ENCODE measurements at regions of chr10 and their contacts with region 1.

Region 1: DNA sequence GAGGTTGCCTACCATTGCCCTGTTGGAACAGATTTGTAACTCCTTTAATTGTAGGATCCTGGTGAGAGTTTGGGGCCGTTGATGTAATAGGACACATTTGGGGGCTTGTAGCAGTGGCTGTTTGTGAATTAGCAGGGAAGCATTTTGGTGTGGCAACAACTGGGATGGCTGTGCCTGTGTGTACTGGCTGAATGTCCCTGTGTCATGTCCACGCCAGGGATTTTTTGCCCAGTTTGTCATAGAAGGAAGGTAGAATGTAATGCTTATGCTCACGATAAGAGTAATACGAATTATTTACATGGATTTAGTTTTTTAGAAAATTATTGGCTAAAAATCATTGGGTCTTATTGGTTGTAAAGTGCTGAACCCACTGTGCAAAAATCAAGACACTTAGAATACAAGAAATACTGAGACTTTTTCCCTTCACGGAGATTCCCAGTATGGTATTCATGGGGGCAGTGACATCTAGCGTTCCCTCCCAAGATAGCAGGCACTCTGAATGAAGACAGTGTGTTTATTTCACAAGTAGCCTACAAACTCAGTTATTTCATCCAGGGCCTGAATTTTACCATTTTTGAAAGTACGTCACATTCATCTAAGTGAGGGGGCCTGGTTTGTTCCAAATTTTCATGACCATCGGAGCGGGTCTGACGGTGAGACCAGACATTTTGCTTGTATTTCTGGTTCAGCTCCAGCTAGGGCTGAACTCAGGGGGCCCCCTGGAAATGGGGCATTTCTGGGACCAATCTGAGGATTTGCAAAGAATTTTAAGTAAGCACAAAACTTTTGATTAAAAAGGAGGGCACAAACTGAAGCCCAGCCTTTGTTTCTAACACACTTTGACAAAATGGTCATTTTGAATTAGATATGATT is 74.7 kb downstream of the CACNB2 start:
- DNase-seq: peak in 6 of 10 donors; percentile 23 to 75 (median 50)
- H3K4me3 ChIP-seq: peak overlapping the region in 1 of 59 donors; percentile 11
- H3K27ac ChIP-seq: peak overlapping the region in 3 of 59 donors; percentile 5 to 32 (median 26)
- H3K27me3 ChIP-seq: peaks cover 0 to under 1% (median 0%) of the 10 kb centered on the region in 45 donors
- CTCF ChIP-seq: peak in 55 of 56 donors; percentile 48 to 89 (median 76)

Region 2: DNA sequence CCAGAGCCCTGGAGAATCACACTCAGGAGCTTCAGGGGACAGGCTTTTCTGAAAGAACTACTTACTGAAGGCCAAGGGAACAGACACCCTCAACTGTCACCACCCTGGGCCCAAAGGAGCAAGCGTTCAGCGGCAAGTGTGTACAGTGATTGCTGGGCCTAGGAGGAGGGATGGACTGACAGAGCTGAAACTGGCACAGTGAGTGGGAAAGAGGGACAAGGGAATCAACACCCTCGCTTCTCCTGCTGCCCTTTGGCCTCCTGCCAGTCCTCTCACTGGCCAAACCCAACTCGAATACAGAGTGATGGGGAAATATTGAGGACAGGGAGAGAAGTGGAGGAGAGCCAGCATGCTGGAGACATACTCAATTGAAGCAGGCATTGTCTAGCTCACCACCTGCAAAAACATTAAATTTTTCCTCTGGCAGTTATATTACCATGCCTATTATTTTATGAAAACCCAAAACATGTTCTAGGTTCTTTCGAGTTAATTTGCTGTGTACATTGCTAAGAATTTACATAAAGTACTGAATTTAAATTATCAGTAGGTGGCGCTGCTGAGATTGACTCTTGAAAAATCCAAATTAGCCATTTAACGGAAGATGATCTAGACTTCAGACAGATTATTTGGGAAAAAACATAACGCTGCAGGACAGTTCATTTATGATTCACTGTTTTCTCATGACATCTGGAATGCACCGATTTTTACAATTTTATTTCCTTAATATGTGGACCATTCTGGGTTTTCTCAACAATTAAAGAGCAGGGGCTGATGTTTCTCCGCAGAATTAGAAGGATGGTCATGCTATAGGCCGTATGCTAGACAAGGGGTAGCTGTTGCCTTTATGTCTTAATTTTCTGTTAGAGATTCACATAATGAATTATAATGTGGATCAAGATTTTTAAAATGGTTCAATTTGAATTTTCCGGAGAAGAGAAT is 477.6 kb before region 1 on chr10:
- intact Hi-C with region 1: loop called in 1 of 2 experiments (anchors 10 kb)
- DNase-seq: peak in 1 of 10 donors; percentile 41
- H3K4me3 ChIP-seq: peak overlapping the region in 1 of 59 donors; percentile 3
- H3K27ac ChIP-seq: peak overlapping the region in 1 of 59 donors; percentile 49
- H3K27me3 ChIP-seq: no peaks in the 10 kb centered on the region
- CTCF ChIP-seq: peak; percentile 47 to 82 (median 72)

Region 3: GRCh38 chr10:17847585-17848296 is 367.2 kb before region 1 on chr10:
- intact Hi-C with region 1: loop called (anchors 10 kb)
- DNase-seq: no peak
- H3K4me3 ChIP-seq: peak overlapping the region in 2 of 59 donors; percentile 4 to 21
- H3K27ac ChIP-seq: no peak overlapping the region
- H3K27me3 ChIP-seq: no peaks in the 10 kb centered on the region
- CTCF ChIP-seq: peak; percentile 17 to 76 (median 58)

Region 4: GRCh38 chr10:18005781-18006456 is 209.0 kb before region 1 on chr10:
- intact Hi-C with region 1: no loop called
- DNase-seq: no peak
- H3K4me3 ChIP-seq: peak overlapping the region in 10 of 59 donors; percentile 2 to 27 (median 20)
- H3K27ac ChIP-seq: peak overlapping the region in 23 of 59 donors; percentile 10 to 77 (median 48)
- H3K27me3 ChIP-seq: peaks cover 0 to 6% (median 0%) of the 10 kb centered on the region in 45 donors
- CTCF ChIP-seq: no peak

Region 5: GRCh38 chr10:18037055-18037454 is 177.9 kb before region 1 on chr10:
- intact Hi-C with region 1: no loop called
- DNase-seq: no peak
- H3K4me3 ChIP-seq: no peak overlapping the region
- H3K27ac ChIP-seq: no peak overlapping the region
- H3K27me3 ChIP-seq: no peaks in the 10 kb centered on the region
- CTCF ChIP-seq: no peak

Measured in dorsolateral prefrontal cortex (tissue), 120 donors.